ENCODE measurements at regions of chr14 and their contacts with region 1.

Region 1: GRCh38 chr14:20413045-20413799 is at the start of gene TEP1:
- DNase-seq: peak; percentile 82 to 88
- ATAC-seq: peak; percentile 97 to 98
- H3K4me3 ChIP-seq: peak within 1 kb of the TSS; percentile 61
- H3K27ac ChIP-seq: peak within 1 kb of the TSS; percentile 95 to 96
- H3K4me1 ChIP-seq: peaks cover 16% of the 10 kb centered on the region
- CTCF ChIP-seq: no peak
- EP300 ChIP-seq: no peak
- POLR2A ChIP-seq: peak; percentile 76
- RAD21 ChIP-seq: 0 out of 5 replicates have a peak, but pooled peaks of 1 of the 2 experiments have one; percentile 21
- polyA plus RNA-seq, gene TEP1: 17.5 and 22.2 TPM in 2 replicates

Region 2: GRCh38 chr14:20327005-20327869 is 86.0 kb before region 1 on chr14:
- CTCF ChIA-PET with region 1: interaction called, 18 read pairs
- POLR2A ChIA-PET with region 1: no interaction called
- DNase-seq: peak; percentile 55 to 74
- ATAC-seq: peak in 1 of 2 experiments; percentile 61; a peak in 3 of 6 replicates
- H3K4me3 ChIP-seq: no peak overlapping the region
- H3K27ac ChIP-seq: no peak overlapping the region
- H3K4me1 ChIP-seq: peaks cover 35% of the 10 kb centered on the region
- CTCF ChIP-seq: peak; percentile 86
- EP300 ChIP-seq: no peak
- POLR2A ChIP-seq: no peak
- RAD21 ChIP-seq: peak; percentile 66 to 73

Region 3: DNA sequence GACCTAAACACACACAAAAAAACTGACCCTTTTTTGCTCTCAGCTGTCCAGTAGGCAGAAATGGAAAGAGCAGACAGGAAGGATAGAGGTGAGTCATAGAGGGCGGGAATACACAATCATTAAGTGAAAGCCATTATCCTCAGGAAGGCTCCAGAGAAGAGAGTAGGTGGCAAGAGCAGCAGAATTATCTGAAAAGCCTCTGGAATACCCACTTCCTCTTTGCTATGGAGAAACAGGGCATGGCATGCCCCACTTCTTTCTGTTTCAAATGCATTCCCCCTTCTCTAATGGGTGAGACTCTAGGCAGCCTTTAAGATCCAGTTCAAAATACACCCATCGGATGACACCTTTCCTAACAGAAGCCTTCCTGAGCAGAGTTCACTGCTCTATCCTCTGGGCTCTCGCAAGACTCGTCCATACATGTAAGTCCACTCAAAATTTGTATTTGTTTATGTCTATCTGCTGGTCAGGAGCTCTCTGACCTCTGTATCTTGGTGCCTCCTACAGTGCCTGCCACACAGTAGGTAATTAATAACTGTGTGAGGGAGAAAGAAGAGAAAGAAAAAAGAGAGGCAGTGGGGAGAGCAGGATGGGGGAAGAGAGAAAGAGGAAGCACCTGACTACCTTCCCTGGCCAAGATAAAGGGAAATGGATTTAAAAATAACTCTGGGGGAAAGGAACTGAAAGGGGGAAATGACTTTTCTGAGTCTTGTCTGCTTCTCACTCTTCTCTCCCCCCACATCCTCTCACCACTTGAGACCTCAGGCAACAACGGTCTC is 14.2 kb after region 1 on chr14:
- CTCF ChIA-PET with region 1: interaction called, 31 read pairs
- POLR2A ChIA-PET with region 1: interaction called, 5 read pairs
- DNase-seq: peak; percentile 20 to 25
- ATAC-seq: peak; percentile 36 to 63; a peak in 3 of 6 replicates
- H3K4me3 ChIP-seq: no peak overlapping the region
- H3K27ac ChIP-seq: peak overlapping the region in 1 of 2 experiments; percentile 37; a peak in 1 of 6 replicates
- H3K4me1 ChIP-seq: no peaks in the 10 kb centered on the region
- CTCF ChIP-seq: no peak
- EP300 ChIP-seq: no peak
- POLR2A ChIP-seq: no peak
- RAD21 ChIP-seq: no peak

Region 4: GRCh38 chr14:20454516-20455354 is 41.5 kb after region 1 on chr14 and contains the starts of genes APEX1 and OSGEP:
- CTCF ChIA-PET with region 1: interaction called, 5 read pairs
- POLR2A ChIA-PET with region 1: interaction called, 20 read pairs
- DNase-seq: peak; percentile 98 to 100
- ATAC-seq: peak; percentile 89 to 91
- H3K4me3 ChIP-seq: peak within 1 kb of the TSS; percentile 73
- H3K27ac ChIP-seq: peak within 1 kb of the TSS; percentile 85 to 96
- H3K4me1 ChIP-seq: peaks cover 24% of the 10 kb centered on the region
- CTCF ChIP-seq: no peak
- EP300 ChIP-seq: no peak
- POLR2A ChIP-seq: peak; percentile 75
- RAD21 ChIP-seq: no peak
- polyA plus RNA-seq, gene APEX1: 324 and 419 TPM in 2 replicates
- polyA plus RNA-seq, gene OSGEP: 32.8 and 33.2 TPM in 2 replicates

Region 5: DNA sequence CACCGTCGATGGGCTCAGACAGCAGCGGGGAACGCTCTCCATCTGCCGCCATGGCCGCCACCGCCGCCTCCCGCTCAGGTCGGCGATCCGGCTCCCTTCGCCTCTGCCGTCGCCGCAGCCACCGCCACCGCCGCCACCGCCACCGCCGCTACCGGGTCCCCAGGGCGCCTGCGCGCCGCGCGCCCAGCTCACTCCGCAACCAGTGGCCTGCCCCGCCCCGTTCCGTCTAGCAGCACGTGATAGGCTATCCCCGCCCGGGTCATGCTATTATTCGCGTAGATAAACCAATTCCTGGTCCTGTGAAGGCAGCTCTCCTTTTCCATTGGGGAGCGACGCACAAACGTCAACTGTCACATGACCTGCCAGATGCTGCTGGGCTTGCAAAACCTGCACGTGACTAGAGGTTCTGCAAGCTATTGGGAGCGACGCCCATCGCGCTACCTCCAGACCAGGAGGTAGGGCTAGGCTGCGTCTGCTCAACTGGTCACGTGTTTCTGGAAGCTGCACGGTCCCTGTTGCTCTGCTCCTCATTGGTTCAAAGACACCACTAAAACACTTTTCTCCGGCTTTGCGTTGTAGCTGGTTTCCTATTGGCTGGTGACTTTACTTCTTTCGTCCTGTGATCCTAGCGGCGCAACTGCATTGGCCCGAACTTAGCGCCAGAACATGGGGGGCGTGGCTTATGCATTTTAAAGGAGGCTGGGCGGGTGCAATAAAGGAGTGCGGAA is 48.2 kb after region 1 on chr14 and contains the start of gene PIP4P1:
- CTCF ChIA-PET with region 1: interaction called, 6 read pairs
- POLR2A ChIA-PET with region 1: interaction called, 20 read pairs
- DNase-seq: peak; percentile 96 to 100
- ATAC-seq: peak; percentile 94 to 98
- H3K4me3 ChIP-seq: peak within 1 kb of the TSS; percentile 85
- H3K27ac ChIP-seq: peak within 1 kb of the TSS; percentile 85 to 92
- H3K4me1 ChIP-seq: peaks cover 31% of the 10 kb centered on the region
- CTCF ChIP-seq: no peak
- EP300 ChIP-seq: no peak
- POLR2A ChIP-seq: peak; percentile 69
- RAD21 ChIP-seq: no peak
- polyA plus RNA-seq, gene PIP4P1: 30.4 and 40.6 TPM in 2 replicates

Region 6: DNA sequence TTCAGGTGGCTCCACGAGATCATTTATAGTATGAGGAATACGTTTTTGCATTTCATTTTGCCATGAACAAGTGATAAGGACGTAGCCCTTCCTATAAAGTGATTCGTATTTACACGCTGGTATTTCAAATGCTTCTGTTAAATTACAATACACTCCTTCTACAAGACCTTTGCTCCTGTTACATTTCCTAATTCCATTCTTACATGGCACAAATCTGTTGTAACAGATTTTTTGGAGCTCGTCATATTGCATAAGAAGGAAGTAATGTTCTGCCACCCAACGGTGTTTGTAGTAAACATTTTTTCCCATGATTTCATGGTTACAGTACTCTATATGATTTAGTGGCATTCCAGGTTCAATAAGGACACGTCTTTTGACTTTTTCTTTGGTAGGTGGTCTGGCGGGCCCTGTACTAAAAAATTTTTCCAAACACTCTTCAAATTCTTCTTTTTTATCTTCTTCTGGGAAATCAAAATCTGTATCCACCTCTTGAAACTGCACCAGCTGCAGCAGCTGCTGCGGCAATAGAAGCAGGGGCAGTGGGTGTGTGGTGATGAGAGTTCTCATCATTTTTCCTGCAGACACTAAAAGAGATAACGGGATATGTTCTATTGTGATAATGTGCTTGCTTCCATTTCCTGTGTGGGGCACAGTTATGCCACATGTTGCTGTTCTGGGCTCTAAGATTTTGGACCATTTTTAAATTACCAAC is 143.4 kb after region 1 on chr14:
- CTCF ChIA-PET with region 1: no interaction called
- POLR2A ChIA-PET with region 1: no interaction called
- DNase-seq: no peak
- ATAC-seq: no peak
- H3K4me3 ChIP-seq: no peak overlapping the region
- H3K27ac ChIP-seq: no peak overlapping the region
- H3K4me1 ChIP-seq: no peaks in the 10 kb centered on the region
- CTCF ChIP-seq: no peak
- EP300 ChIP-seq: no peak
- POLR2A ChIP-seq: no peak
- RAD21 ChIP-seq: no peak